OCI-LY7 (cell line): ENCODE measurements at regions of chr11 and their contacts with region 1.

Region 1: GRCh38 chr11:57083641-57084385 is 95.1 kb downstream of the OR5AK2 start:
- DNase-seq: no peak
- H3K4me3 ChIP-seq: no peak overlapping the region
- H3K27ac ChIP-seq: no peak overlapping the region
- H3K4me1 ChIP-seq: no peaks in the 10 kb centered on the region
- CTCF ChIP-seq: no peak

Region 2: DNA sequence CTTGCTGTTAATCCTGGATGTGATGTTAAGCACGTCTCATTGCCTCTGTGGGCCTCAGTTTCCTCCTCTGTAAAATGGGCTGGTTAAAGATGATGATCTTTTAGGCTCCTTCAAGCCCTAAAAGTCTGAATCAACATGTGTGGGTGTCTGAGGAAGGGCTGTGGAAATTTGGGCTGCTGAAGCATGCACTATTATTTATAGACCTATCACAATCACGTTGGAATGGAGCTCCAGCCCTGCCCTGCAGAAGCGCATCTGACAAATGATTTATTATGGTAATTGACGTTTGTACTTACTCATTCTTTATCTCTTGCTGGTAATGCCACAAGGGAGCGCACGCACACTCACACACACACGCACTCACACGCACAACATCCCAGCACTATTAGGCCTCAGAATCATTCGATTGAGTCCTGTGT is 274.7 kb after region 1 on chr11:
- CTCF ChIA-PET with region 1: no interaction called
- POLR2A ChIA-PET with region 1: interaction called, 10 read pairs
- intact Hi-C with region 1: no loop called
- DNase-seq: no peak
- H3K4me3 ChIP-seq: no peak overlapping the region
- H3K27ac ChIP-seq: no peak overlapping the region
- H3K4me1 ChIP-seq: no peaks in the 10 kb centered on the region
- CTCF ChIP-seq: no peak